BJ (cell line): ENCODE measurements at regions of chr3 and their contacts with region 1.

Region 1: DNA sequence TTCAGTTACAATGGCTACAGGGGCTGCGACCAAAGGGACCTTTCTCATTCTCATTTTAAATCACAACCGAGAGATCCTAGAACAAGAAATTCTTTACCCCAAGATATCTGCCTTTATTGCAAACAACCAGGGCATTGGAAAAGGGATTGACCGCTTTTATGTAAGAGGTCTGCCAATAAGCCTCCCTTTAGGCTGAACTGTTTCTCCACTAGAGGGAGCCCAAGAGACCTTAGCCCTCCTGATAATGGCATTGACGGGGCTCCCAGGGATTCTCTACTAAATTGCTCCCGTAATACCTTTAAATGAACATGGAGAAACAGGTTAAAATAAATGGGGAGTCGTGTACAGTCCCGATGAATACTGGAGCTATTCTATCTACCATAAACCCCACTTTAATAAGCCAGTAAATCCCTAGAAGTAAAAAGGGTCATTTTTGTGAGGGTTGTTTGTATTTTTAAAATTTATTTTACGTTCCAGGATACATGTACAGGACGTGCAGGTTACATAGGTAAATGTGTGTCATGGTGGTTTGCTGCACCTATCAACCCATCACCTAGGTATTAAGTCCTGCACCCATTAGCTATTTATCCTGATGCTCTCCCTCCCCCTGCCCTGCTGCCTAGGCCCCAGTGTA is 7.5 kb upstream of the IGSF10 start:
- DNase-seq: no peak
- H3K4me3 ChIP-seq: no peak overlapping the region
- H3K27me3 ChIP-seq: no peaks in the 10 kb centered on the region; the same call in 1 of the 2 replicates
- CTCF ChIP-seq: peak; percentile 95

Region 2: GRCh38 chr3:151445273-151446001 is 23.0 kb before region 1 on chr3:
- CTCF ChIA-PET with region 1: interaction called, 13 read pairs
- POLR2A ChIA-PET with region 1: no interaction called
- DNase-seq: peak; percentile 63
- H3K4me3 ChIP-seq: no peak overlapping the region
- H3K27me3 ChIP-seq: no peaks in the 10 kb centered on the region
- CTCF ChIP-seq: no peak

Region 3: GRCh38 chr3:151483961-151484520 is 15.6 kb after region 1 on chr3:
- CTCF ChIA-PET with region 1: interaction called, 10 read pairs
- POLR2A ChIA-PET with region 1: no interaction called
- DNase-seq: no peak
- H3K4me3 ChIP-seq: no peak overlapping the region
- H3K27me3 ChIP-seq: no peaks in the 10 kb centered on the region
- CTCF ChIP-seq: no peak

Region 4: GRCh38 chr3:151553888-151554287 is 85.5 kb after region 1 on chr3:
- CTCF ChIA-PET with region 1: no interaction called
- POLR2A ChIA-PET with region 1: no interaction called
- DNase-seq: no peak
- H3K4me3 ChIP-seq: no peak overlapping the region
- H3K27me3 ChIP-seq: no peaks in the 10 kb centered on the region
- CTCF ChIP-seq: no peak

Region 5: DNA sequence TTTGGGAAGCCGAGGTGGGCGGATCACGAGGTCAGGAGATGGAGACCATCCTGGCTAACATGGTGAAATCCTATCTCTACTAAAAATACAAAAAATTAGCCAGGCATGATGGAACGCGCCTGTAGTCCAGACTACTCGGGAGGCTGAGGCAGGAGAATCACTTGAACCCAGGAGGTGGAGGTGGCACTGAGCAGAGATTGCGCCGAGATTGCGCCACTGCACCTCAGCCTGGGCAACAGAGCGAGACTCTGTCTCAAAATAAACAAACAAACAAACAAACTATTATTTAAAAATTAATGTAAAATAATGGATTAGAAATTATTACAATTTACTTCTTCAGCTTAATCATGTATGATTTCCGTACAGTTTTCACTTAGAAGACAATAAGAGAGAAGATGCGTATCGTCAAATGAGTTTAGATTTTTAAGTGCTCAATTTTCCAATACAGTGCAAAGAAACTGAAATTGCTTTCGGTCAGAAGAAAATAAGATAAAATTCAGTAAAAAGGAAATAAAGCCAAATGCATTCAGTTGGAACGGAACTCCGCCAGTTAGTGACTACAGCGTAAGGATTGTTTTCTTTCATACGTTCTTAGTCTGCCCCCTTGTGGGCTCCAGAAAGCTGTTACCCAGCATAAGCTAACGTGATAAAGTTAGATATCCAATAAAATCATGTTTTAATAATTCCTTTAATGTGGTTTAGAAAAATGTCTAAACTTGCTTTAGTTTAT is 370.3 kb after region 1 on chr3:
- CTCF ChIA-PET with region 1: interaction called, 32 read pairs
- POLR2A ChIA-PET with region 1: no interaction called
- DNase-seq: no peak
- H3K4me3 ChIP-seq: no peak overlapping the region
- H3K27me3 ChIP-seq: no peaks in the 10 kb centered on the region
- CTCF ChIP-seq: peak; percentile 77

Region 6: GRCh38 chr3:151918253-151919029 is 450.0 kb after region 1 on chr3:
- CTCF ChIA-PET with region 1: interaction called, 13 read pairs
- POLR2A ChIA-PET with region 1: no interaction called
- DNase-seq: no peak
- H3K4me3 ChIP-seq: no peak overlapping the region
- H3K27me3 ChIP-seq: no peaks in the 10 kb centered on the region
- CTCF ChIP-seq: peak; percentile 54